Activated CD8-positive, alpha-beta T cell treated with anti-CD3 and anti-CD28 coated beads for 36 hours (primary cell): ENCODE measurements at regions of chr5 and their contacts with region 1.

Region 1: GRCh38 chr5:90264689-90265544 is 144.6 kb downstream of the CETN3 start:
- DNase-seq: peak; percentile 68
- ATAC-seq: no peak
- H3K4me3 Mint-ChIP-seq: no peak overlapping the region
- H3K27ac Mint-ChIP-seq: no peak overlapping the region
- H3K4me1 Mint-ChIP-seq: no peaks in the 10 kb centered on the region
- H3K27me3 Mint-ChIP-seq: peaks cover 4% of the 10 kb centered on the region
- CTCF ChIP-seq: peak; percentile 80

Region 2: DNA sequence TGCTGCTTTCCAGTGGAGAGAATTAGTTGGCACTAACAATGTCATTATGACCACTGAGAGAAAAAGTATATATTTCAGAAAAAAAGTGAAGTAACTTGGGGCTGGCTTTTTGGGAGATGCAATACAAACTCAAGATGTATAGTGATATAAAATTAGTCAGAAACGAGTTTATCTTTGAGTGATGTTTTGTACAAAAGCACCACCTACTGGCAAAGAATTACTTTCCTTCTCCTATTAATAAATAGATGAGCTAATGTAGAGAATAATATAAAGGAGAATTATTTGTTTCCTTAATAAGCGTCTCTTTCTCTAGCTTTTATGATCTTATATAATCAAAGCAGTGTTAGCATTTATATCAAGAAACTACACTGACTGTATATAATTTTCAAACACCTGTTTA is 1540.7 kb before region 1 on chr5:
- CTCF ChIA-PET with region 1: interaction called, 20 read pairs
- POLR2A ChIA-PET with region 1: no interaction called
- intact Hi-C with region 1: loop called (anchors 5 kb)
- DNase-seq: no peak
- ATAC-seq: no peak
- H3K4me3 Mint-ChIP-seq: no peak overlapping the region
- H3K27ac Mint-ChIP-seq: no peak overlapping the region
- H3K4me1 Mint-ChIP-seq: no peaks in the 10 kb centered on the region
- H3K27me3 Mint-ChIP-seq: peaks cover 24% of the 10 kb centered on the region
- CTCF ChIP-seq: peak; percentile 16

Region 3: DNA sequence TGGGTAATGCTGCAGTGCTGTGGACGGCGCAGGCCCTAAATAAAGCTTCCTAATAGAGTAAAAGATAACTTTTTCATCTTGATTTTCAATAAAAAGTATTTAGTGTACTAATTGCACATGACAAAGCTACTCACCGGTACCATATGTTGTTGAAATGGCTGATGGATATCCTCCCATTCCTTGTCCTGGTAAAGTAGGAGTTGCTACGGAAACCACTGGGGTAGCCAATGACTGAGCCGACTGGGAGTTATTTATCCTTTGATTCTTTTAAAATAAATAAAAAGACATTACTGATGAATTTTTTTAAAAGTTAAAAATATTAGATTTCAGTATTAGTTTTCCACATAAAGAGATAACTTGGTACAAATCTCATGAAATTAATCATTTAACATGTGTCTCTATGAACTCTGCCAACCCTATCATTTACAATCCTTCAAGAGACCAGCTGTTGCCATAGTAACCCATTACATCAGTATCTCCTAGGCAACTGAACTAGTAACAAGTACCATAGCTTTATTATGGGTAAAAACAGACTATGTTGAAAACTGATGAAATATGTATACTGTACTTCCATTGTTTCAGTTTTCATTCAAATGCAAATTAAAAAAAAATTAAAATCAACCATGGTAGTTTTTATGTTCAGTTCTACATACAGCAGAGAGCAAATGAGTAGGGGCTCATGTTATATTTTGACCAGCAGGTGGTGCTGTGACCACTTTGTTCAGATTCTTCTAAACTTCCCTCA is 1535.7 kb before region 1 on chr5:
- CTCF ChIA-PET with region 1: interaction called, 20 read pairs
- POLR2A ChIA-PET with region 1: no interaction called
- intact Hi-C with region 1: loop called (anchors 5 kb)
- DNase-seq: peak; percentile 76
- ATAC-seq: peak; percentile 71
- H3K4me3 Mint-ChIP-seq: no peak overlapping the region
- H3K27ac Mint-ChIP-seq: no peak overlapping the region
- H3K4me1 Mint-ChIP-seq: peaks cover 5% of the 10 kb centered on the region
- H3K27me3 Mint-ChIP-seq: peaks cover 10% of the 10 kb centered on the region
- CTCF ChIP-seq: peak; percentile 80

Region 4: DNA sequence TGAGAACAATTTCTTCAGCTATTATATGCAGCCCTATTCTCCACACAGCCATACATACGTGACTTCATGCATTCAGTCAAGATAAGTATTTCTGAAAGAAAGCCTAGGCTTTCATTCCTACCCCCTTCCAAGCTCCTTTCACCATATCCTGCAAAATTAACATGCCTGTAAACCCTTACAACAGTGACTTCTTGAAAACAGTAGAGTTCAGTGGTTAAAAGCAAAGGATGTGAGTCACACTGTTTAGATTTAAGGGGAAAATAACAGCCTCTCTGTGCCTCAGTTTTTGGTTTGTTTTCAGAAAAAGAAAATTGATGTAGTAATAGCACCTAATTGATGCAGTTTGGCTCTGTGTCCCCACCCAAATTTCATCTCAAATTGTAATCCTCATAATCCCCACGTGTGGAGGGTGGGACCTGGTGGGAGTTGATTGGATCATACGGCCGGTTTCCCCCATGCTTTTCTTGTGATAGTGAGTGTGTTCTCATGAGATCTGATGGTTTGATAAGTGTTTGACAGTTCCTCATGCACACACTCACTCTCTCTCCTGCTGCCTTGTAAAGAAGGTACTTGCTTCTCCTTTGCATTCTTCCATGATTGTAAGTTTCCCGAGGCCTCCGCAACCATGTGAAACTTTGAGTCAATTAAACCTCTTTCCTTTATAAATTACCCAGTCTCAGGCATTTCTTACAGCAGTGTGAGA is 120.1 kb before region 1 on chr5:
- CTCF ChIA-PET with region 1: no interaction called
- POLR2A ChIA-PET with region 1: no interaction called
- intact Hi-C with region 1: no loop called
- DNase-seq: no peak
- ATAC-seq: no peak
- H3K4me3 Mint-ChIP-seq: no peak overlapping the region
- H3K27ac Mint-ChIP-seq: no peak overlapping the region
- H3K4me1 Mint-ChIP-seq: no peaks in the 10 kb centered on the region
- H3K27me3 Mint-ChIP-seq: no peaks in the 10 kb centered on the region
- CTCF ChIP-seq: no peak

Region 5: GRCh38 chr5:90251447-90251846 is 13.5 kb before region 1 on chr5:
- CTCF ChIA-PET with region 1: interaction called, 12 read pairs
- POLR2A ChIA-PET with region 1: no interaction called
- intact Hi-C with region 1: no loop called
- DNase-seq: no peak
- ATAC-seq: no peak
- H3K4me3 Mint-ChIP-seq: no peak overlapping the region
- H3K27ac Mint-ChIP-seq: no peak overlapping the region
- H3K4me1 Mint-ChIP-seq: no peaks in the 10 kb centered on the region
- H3K27me3 Mint-ChIP-seq: no peaks in the 10 kb centered on the region
- CTCF ChIP-seq: no peak